ENCODE measurements at regions of chr4 and their contacts with region 1.

Region 1: DNA sequence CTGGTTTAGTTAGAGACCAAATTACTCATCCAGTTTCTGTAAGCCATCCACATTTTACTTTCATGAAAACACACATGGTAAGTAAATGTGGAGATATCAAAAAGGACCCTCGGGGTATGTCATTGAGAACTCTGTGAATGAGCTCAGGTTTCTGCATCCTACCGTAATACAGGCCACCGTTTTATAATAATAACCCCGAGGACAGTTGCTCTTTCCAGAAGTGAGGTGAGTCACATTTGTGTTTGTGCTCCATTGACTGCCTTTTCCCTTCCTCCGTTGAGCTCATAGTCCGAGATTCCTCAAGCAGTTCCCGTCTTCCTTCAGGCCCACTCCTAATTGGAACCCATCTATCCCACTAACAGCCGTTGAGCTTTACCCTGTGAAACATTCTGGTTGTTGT is 95.3 kb downstream of the GRID2 start:
- DNase-seq: no peak
- ATAC-seq: no peak
- H3K4me3 ChIP-seq: no peak overlapping the region
- H3K27ac ChIP-seq: no peak overlapping the region
- H3K4me1 ChIP-seq: no peaks in the 10 kb centered on the region
- H3K27me3 ChIP-seq: no peaks in the 10 kb centered on the region

Region 2: DNA sequence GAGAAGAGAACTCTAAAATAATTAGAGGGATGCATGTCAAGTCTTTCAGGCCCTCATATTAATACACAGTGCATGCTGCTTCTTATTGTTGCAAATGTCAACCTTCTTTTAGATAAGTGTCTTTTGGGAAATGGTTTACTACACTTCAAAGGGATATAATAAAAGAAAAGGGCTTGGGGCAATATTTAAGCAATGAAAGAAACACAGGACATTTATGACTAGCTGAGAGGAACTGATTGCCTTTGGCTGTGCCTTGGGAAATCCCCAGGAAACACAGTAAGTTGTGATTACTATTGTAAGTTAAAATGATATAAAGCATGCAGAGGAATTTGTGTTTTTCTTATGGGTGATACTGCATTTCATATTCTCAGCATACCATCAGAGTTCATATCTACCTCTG is 1131.5 kb before region 1 on chr4:
- intact Hi-C with region 1: loop called in 1 of 4 experiments (anchors 10 kb)
- DNase-seq: no peak
- ATAC-seq: no peak
- H3K4me3 ChIP-seq: no peak overlapping the region
- H3K27ac ChIP-seq: no peak overlapping the region
- H3K4me1 ChIP-seq: no peaks in the 10 kb centered on the region
- H3K27me3 ChIP-seq: no peaks in the 10 kb centered on the region

Measured in right cardiac atrium (tissue), 5 donors.